PC-9 (cell line): ENCODE measurements at regions of chr19 and their contacts with region 1.

Region 1: DNA sequence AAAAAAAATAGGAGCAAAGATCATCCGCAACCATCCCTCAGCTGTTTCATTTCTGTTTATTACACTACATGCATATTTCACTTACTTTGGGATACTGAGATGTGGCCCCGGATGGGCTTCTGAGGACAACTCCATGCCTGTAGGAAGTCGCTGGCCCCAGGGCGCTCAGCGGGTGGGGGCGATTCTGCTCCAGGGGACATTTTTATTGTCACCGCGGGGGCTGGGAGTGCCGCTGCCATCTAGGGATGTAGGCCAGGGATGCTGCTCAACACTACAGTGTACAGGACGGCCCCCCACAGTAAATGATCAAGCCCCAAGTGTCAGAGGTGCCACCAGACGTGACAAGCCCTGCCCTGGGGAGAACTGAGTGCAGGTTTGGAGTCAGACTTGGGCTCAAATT is 6.4 kb upstream of the BST2 start:
- DNase-seq: no peak
- H3K4me3 ChIP-seq: no peak overlapping the region
- H3K27ac ChIP-seq: no peak overlapping the region
- H3K4me1 ChIP-seq: no peaks in the 10 kb centered on the region; the same call in 1 of the 2 replicates
- H3K27me3 ChIP-seq: no peaks in the 10 kb centered on the region
- CTCF ChIP-seq: no peak

Region 2: GRCh38 chr19:17424743-17425365 is 13.1 kb after region 1 on chr19:
- CTCF ChIA-PET with region 1: no interaction called
- POLR2A ChIA-PET with region 1: interaction called, 21 read pairs
- intact Hi-C with region 1: no loop called
- DNase-seq: no peak
- H3K4me3 ChIP-seq: no peak overlapping the region
- H3K27ac ChIP-seq: no peak overlapping the region
- H3K4me1 ChIP-seq: 0 out of 2 replicates have a peak, but pooled peaks cover 6% of the 10 kb centered on the region
- H3K27me3 ChIP-seq: no peaks in the 10 kb centered on the region
- CTCF ChIP-seq: 0 out of 2 replicates have a peak, but pooled peaks have one; percentile 34